ENCODE measurements at regions of chr7 and their contacts with region 1.

Region 1: DNA sequence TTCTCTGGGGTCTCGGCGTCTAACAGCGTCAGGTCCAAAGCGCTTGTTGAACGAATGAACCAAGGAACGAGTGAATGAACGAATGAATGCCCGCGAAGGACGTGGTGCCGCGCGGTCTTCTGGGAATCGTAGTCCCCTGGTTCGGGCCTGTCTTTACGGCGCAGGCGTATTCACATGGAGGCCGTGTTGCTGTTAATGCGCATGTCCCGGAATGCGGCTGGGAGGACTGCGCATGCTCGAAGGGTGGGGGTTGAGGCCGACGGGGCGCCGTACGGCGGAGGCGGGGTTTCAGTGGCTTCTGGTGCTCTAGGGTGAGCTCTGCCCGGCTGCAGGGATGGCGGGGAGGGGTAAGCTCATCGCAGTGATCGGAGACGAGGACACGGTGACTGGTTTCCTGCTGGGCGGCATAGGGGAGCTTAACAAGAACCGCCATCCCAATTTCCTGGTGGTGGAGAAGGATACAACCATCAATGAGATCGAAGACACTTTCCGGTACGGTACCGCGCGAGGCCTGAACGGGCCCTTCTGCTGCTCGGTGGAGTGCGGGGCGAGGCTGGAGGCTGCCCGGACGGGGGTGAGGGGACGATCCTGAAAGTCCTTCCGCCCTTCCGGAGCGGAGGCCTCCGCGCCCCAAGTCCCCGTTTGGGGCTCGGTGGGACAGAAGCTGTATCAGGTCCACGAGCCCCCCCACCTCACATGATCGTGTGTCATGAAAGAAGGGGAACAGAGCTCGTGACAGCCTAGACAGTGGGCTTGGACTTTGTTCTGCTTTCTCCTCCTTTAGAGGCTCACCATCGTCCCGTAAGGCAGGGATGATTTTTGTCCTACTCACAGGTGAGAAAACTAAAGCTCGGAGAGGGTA is at the start of gene ATP6V1F:
- DNase-seq: peak; percentile 89 to 99 (median 95)

Region 2: DNA sequence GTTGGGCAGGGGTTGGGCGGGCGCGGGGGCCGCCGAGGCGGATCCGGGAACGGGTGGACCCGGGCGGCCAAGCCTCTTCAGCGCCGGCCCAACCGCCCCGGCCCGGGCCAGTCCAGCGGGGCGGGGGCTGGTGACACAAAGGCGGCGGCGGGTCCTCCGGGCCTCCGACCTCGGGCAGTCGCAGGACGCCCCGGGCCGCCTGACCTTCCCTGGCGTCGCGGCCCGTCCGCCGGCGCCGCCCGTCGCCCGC is 332.0 kb before region 1 on chr7:
- intact Hi-C with region 1: loop called (anchors 10 kb)
- DNase-seq: peak in 4 of 10 donors; percentile 16 to 28 (median 22)

Region 3: DNA sequence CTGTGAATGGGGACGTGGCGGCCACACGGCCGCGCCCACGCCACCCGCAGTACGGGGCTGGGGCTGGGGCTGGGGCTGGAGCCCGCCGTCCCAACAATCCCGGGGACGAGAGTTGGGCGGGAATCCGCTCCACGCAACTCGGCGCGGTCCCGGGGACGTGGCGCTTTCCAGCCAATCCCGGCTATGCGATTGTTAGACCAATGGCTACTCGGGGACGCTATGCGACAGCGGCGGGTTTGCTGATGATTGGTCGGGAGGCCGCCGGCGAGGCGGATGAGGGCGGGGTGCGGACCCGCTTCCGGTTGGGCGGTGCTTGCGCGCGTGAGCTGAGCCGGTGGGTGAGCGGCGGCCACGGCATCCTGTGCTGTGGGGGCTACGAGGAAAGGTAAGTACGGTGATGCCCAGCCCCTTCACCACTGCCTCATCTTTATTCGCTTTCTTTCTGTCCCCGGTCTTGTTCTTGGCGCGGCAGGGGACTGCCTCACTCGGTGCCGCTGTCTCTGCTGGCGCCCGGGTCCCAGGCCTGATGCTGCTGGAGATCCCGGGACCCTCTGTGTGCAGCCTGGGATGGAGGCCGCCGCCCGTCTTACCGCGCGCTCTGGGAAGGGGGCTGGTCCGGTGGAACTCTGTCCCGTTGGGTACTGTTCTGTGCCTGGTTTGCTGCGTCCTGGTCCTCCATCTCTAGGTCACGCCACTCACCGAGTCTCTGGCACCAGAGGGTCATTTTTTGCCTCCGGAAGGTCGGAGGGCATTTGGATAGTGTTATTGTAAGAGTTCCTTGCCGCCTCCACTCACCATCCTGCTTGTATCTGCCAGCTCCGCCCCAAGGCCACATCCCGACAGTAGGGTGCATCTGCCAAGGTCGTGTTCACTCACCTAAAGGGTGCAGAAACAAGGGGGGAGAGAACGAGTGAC is 123.5 kb before region 1 on chr7 and contains the start of gene CALU:
- intact Hi-C with region 1: loop called (anchors 1 kb)
- DNase-seq: peak; percentile 94 to 99 (median 98)

Region 4: DNA sequence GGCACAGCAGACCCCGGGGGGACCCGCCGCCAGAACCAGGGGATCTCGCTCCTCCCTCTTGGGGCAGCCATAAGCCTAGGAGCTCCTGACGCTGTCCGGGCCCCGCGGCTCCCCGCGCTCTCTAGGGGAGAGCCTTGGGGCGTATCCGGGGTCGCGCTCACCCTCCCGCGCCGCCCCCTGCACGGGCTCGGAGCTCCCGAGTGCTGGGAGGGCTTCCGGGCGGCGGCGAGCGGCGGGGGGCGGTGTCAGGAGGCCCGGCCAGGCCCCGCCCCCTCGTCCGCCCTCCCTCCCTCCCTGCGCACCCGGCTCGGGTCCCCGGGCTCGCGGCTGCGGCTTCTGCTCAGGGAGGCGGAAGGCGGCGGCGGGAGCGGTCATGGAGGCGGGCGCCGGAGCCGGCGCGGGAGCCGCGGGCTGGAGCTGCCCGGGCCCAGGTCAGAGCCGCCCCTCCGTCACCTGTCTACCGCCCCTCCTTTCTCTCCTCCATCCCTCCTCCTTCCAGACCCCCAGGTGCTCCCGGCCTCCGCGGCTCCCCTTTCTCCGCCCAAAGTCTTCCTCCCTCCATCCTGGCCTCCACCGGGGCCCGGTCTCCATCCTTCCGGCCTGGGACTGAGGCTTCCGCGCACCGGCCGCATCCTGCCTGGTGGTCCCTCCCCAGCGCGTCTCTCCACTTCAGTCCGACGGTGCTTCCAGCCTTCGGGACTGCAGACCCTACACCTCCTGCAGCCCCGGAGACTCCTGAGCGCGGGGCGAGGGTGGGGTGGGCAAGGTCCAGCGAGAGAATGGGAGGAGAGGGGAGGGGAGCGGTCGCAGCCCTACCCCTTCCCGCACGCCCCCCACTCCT is 71.5 kb before region 1 on chr7:
- intact Hi-C with region 1: loop called (anchors 5 kb)
- DNase-seq: peak; percentile 54 to 96 (median 78)

Region 5: DNA sequence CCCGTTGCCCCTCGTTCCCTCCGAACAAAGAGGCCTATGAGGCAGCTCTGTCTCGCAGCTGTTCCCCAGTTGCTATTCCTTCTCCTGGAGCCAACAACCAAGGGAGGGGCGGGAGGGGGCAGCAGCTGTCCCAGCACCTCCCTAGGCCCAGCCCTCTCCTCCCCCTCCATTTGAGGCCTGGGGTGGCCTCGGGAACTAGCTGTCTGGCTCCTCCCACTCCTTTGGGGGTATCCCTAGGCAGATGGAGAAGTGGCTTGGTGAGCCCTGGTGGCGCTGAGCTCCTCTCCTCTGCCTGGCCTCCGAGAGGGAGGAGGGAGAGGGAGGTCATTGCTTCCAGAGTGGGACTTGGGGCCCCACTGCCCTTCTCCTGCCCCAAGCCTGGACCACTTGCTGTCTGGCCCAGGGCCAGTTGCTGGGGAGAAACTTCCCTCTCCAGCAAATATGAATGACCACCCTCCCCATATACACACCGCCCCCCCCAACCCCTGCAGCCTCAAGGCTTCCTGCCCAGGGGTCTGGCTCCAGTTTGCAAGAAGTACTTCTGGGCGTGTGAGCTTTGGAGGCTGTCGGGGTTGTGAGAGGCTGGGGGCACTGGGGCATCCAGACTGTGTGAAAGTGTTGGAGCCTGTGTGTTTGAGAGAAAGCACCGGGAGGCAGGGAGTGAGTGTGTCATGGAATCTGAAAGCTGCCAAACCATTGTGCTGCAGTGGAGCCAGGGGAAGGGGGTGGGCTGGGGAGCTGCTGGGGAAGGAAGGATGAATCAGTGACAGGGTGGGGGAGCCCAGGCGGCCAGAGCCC is 29.5 kb before region 1 on chr7:
- intact Hi-C with region 1: loop called (anchors 2 kb)
- DNase-seq: peak in 8 of 10 donors; percentile 54 to 94 (median 76)

Region 6: GRCh38 chr7:128919881-128920799 is 57.3 kb after region 1 on chr7:
- intact Hi-C with region 1: no loop called
- DNase-seq: peak in 6 of 10 donors; percentile 9 to 74 (median 32)

Region 7: GRCh38 chr7:129054438-129055293 is 191.9 kb after region 1 on chr7 and contains the start of gene TNPO3:
- intact Hi-C with region 1: no loop called
- DNase-seq: peak; percentile 91 to 99 (median 92)